Ovary (tissue), 10 donors: ENCODE measurements at regions of chr1 and their contacts with region 1.

Region 1: DNA sequence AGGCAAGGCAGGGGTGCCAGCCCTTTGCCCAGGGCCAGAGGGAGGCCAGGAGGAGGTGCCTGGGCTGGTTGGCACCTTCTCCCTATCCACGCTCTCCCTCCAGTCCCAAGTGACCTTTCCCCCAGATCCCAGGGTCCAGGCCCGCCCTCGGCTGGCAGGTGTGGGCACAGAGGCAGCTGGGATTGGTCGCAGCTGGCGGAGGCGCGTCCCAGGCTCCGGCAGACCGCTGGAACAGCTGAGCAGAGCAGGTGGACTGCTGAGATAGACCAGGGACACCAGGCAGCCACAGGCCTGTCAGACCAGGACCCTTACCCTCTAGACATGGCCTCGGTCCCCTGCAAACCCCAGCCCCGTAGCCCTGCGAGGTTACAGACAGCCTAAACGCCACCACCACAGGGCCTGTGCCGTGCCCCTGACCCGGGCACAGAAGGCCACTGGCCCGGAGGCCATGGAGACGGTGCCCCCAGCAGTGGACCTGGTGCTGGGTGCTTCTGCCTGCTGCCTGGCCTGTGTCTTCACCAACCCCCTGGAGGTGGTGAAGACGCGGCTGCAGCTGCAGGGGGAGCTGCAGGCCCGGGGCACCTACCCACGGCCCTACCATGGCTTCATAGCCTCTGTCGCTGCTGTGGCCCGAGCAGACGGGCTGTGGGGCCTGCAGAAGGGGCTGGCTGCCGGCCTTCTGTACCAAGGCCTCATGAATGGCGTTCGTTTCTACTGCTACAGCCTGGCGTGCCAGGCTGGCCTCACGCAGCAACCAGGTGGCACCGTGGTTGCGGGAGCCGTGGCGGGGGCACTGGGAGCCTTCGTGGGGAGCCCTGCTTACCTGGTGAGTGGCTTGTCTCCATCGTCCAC is at the start of gene SLC25A34:
- DNase-seq: no peak
- H3K4me3 ChIP-seq: no peak within 1 kb of the TSS
- H3K27ac ChIP-seq: peak within 1 kb of the TSS in 1 of 2 donors; percentile 30
- H3K4me1 ChIP-seq: peaks cover 5% of the 10 kb centered on the region
- H3K27me3 ChIP-seq: no peaks in the 10 kb centered on the region
- CTCF ChIP-seq: no peak
- EP300 ChIP-seq: no peak
- POLR2A ChIP-seq: no peak
- total RNA-seq, gene SLC25A34: 1.1 to 2.5 (median 2.0) TPM

Region 2: DNA sequence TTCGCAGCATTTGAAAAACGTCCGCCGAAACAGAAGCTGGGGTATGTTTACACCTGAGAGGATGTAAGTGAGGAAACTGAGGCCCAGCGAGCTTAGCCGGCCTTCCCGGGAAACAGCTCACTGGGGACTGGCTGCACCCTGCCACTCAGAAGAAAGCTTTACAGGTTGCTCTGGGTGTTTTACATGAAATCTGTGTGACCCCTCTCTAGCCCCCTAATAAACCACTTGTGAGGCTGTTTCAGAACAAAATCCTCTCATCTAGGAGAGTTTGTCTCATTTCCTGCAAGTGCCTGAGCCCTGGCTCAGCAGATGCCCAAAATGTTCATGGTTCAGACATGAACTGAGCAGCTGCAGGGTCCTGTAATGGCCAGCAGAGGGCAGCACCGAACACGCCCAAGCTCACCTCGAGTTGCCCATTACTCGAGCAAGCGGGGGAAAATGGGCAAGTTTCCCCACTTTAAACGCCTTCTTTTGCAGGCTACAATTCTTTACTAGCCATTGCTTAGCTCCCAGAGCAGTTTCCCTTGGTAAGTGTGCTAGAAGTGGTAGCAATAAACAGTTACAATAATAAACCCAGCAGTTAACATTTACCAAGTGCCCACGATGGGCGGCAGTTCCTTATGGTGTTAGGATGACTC is 412.8 kb before region 1 on chr1:
- intact Hi-C with region 1: loop called in 2 of 4 experiments (anchors 10 kb)
- DNase-seq: peak; percentile 70 to 87 (median 83)
- H3K4me3 ChIP-seq: no peak overlapping the region
- H3K27ac ChIP-seq: no peak overlapping the region
- H3K4me1 ChIP-seq: peaks cover 2% of the 10 kb centered on the region
- H3K27me3 ChIP-seq: no peaks in the 10 kb centered on the region
- CTCF ChIP-seq: peak; percentile 90 to 95 (median 93)
- EP300 ChIP-seq: no peak
- POLR2A ChIP-seq: peak; percentile 21

Region 3: GRCh38 chr1:15598436-15598835 is 137.8 kb before region 1 on chr1:
- intact Hi-C with region 1: loop called in 3 of 4 experiments (anchors 10 kb)
- DNase-seq: no peak
- H3K4me3 ChIP-seq: no peak overlapping the region
- H3K27ac ChIP-seq: no peak overlapping the region
- H3K4me1 ChIP-seq: peaks cover 2% of the 10 kb centered on the region
- H3K27me3 ChIP-seq: no peaks in the 10 kb centered on the region
- CTCF ChIP-seq: no peak
- EP300 ChIP-seq: no peak
- POLR2A ChIP-seq: no peak